ENCODE measurements at regions of chr17 and their contacts with region 1.

Region 1: GRCh38 chr17:40422990-40423616 is 5.4 kb upstream of the TOP2A start:
- DNase-seq: no peak
- CTCF ChIP-seq: no peak

Region 2: GRCh38 chr17:40410082-40410481 is 13.0 kb before region 1 on chr17:
- CTCF ChIA-PET with region 1: interaction called, 38 read pairs
- POLR2A ChIA-PET with region 1: no interaction called
- DNase-seq: no peak
- CTCF ChIP-seq: no peak

Region 3: DNA sequence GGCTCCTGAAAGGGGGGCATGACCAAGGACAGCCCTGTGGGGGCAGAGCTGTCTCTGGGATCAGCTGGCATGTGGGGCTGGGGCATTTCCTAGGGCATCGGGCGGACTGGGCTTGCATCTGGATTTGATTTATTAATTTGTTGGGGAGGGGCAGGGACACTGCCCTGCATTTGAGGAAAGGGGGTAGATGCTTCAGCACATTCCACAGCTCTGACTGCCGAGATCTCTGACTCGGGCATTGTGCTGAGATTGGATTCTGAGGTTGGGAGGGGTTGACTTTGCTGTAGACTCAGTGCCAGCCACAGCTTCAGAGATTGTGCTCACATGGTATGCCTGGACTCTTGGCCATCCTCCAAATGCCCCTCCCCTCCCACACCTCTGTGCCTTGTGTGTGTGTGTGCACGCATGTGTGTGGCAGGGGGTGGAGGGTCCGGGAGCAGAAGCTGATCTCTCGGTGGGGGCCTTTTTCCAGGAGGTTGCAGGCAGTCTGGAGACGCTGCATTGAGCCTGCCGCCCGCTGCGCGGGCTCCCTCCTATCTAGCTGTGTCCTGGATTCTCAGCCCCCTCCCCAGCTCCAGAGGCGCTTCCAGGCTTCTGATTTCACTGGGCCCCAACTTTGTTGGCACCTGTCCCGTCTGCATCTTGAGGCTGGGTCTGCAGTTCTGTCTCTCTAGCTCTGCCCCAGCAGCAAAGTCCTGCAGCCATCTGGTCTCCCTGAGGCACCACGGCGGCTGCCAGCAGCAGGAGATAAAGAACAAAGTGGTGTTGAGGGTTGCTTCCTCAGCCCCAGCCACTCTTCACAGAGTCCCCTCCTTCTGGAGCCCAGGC is 35.1 kb after region 1 on chr17:
- CTCF ChIA-PET with region 1: no interaction called
- POLR2A ChIA-PET with region 1: no interaction called
- DNase-seq: no peak
- CTCF ChIP-seq: no peak

Measured in GM10248 (cell line).